ENCODE measurements at regions of chr9 and their contacts with region 1.

Region 1: GRCh38 chr9:132312873-132313272 is 41.9 kb downstream of the SETX start:
- DNase-seq: no peak
- H3K4me3 ChIP-seq: no peak overlapping the region
- H3K4me3 Mint-ChIP-seq: no peak overlapping the region
- H3K27ac ChIP-seq: no peak overlapping the region
- H3K27ac Mint-ChIP-seq: peak overlapping the region in 2 of 7 donors; percentile 2 to 32
- H3K4me1 ChIP-seq: peaks cover 13% of the 10 kb centered on the region
- H3K4me1 Mint-ChIP-seq: peaks cover 14 to 28% (median 24%) of the 10 kb centered on the region in 4 donors
- H3K27me3 ChIP-seq: no peaks in the 10 kb centered on the region
- H3K27me3 Mint-ChIP-seq: no peaks in the 10 kb centered on the region

Region 2: DNA sequence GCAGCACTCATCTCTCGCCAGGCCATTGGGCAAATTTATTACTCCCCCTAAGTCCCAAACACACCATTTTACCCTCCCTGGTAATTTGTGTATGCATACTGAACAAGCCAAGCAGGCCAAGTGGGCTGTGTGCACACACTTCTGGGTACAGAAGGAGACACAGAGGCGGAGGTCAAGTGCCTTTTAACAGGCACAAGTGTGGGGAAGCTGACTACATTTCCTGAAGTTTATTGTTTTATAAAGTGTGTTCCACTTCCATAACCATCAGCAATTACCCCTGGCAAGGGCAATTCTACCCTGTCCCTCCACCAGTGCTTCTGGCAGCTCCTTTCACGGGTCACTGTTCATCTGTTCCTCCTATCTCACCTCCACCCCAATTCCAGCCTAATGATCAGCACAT is 52.0 kb before region 1 on chr9:
- CTCF ChIA-PET with region 1: interaction called, 11 read pairs
- POLR2A ChIA-PET with region 1: no interaction called
- intact Hi-C with region 1: no loop called
- DNase-seq: no peak
- H3K4me3 ChIP-seq: no peak overlapping the region
- H3K4me3 Mint-ChIP-seq: no peak overlapping the region
- H3K27ac ChIP-seq: no peak overlapping the region
- H3K27ac Mint-ChIP-seq: peak overlapping the region in 1 of 7 donors; percentile 43
- H3K4me1 ChIP-seq: peaks cover 9% of the 10 kb centered on the region
- H3K4me1 Mint-ChIP-seq: peaks cover 4 to 19% (median 6%) of the 10 kb centered on the region in 4 donors
- H3K27me3 ChIP-seq: no peaks in the 10 kb centered on the region
- H3K27me3 Mint-ChIP-seq: no peaks in the 10 kb centered on the region